Left colon (tissue), 2 donors: ENCODE measurements at regions of chr12 and their contacts with region 1.

Region 1: DNA sequence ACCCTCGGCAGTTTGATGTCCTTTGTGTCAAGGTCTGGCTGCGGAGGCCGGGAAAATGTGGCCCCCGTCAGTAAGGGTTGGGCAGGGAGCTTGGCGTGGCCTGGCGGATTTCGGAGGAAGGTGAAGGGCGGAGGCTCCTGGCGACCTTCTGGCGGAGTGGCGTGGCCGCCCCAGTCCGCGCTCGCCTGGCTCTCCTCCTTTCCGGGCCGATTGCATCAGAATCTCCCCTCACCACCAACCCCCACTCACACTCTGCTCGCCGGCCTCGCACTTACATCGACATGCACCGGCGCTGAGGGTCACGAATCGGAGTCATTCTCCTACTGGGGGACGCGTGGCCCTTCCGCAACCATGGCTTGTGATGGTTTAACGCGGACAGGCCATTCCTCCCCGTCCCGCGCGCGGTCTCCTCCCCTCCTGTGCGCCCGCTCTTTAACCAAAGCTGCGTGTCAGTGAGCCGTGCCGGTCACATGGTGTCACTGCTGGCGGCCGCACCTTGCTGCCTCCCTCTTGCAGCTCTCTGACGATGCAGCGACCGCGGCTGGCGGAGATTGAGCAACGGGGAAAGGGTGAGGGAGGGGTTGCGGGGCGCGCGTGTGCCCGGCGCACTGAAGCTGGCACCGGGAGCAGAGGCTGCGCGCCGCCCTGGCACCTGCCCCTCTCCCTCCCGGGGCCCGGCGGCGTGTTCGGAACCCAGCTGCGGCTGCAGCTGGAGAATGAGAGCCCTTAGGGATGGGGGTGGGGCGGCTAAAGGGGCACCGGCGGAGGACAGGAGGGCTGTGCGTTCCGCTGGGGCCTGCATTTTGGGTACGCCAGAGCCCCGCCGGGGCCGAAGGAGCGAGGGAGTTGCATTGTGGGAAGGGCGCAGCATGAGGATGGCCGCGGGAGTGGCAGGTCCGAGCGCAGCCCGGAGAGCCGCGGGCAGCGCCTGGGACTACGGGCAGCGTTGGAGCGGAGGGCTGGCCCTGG is at the start of gene SLC38A1:
- DNase-seq: peak; percentile 90 to 93
- ATAC-seq: peak; percentile 73
- total RNA-seq, gene SLC38A1: 126 to 149 TPM

Region 2: GRCh38 chr12:46108721-46109120 is 160.2 kb before region 1 on chr12:
- intact Hi-C with region 1: no loop called
- DNase-seq: no peak
- ATAC-seq: no peak

Region 3: GRCh38 chr12:46219884-46220655 is 48.8 kb before region 1 on chr12:
- intact Hi-C with region 1: loop called in 1 of 2 experiments (anchors 5 kb)
- DNase-seq: peak in 1 of 2 donors; percentile 43
- ATAC-seq: peak; percentile 28

Region 4: DNA sequence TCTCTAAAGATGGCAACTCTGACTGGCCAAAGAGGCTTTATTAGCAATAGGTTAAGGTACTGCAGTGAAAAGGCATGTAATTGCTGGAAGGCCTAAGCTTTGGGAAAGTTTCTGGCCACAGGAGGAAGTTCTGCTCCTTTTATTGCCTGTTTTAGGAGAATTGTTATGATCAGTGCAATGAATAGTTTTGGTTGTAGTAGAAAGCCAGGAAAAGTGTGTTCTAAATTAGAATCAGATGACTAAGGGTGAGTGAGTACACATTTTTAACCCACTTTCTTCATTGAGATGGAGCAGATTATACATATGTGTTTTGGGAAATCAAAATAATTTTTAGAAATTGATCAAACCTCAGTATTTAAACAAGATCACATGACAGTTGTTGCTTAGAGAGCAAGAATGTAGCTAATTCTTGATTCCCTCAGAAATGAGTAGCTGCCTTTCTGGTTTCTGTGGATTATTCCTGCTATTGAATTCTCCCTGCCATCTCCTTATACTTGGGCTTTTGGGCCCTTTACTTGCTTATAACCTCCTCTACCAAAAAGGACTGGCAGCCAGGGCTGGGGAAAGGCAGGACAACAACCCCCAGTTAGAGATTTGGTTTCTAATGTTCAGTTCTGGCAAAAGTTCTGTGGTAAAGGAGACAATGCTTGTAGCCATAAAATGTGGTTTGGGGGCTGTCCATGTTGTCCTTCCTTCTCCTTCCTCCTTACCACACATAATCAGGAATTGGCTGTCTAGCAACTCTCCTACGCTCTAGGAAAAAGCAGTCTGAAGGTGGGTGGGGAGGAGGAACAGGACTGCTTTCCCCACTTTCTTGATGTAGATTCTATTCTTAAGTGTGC is 339.8 kb after region 1 on chr12:
- intact Hi-C with region 1: no loop called
- DNase-seq: no peak
- ATAC-seq: no peak

Region 5: DNA sequence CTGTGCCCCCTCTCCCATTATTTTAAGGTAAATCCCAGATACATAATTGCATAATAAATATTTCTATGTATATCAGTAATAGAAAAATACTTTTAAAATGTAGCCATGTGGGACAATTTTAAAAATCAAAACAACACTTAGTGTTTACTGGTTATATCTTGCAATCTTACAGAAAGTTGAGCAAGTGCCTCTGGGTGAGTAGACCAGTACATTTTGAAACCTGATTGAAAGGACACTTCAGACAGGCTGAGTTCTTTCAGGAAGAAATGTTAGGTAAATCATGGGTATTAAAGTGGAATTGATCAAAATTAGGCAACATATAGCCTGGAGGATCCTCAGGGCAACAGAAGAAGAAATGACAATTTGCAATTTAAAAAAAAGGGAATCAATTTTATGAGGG is 549.8 kb after region 1 on chr12:
- intact Hi-C with region 1: no loop called
- DNase-seq: no peak
- ATAC-seq: no peak